Activated naive CD8-positive, alpha-beta T cell treated with anti-CD3 and anti-CD28 coated beads, Interleukin-2, amount 10 ng/mL, durations not matched to agents 7 days and 5 days (primary cell): ENCODE measurements at regions of chr19 and their contacts with region 1.

Region 1: GRCh38 chr19:12789904-12790619 is 1.2 kb upstream of the JUNB start:
- DNase-seq: peak; percentile 98
- ATAC-seq: peak; percentile 51
- H3K4me3 Mint-ChIP-seq: peak overlapping the region; percentile 94
- H3K27ac Mint-ChIP-seq: peak overlapping the region; percentile 95
- H3K4me1 Mint-ChIP-seq: peaks cover 28% of the 10 kb centered on the region
- H3K27me3 Mint-ChIP-seq: no peaks in the 10 kb centered on the region

Region 2: DNA sequence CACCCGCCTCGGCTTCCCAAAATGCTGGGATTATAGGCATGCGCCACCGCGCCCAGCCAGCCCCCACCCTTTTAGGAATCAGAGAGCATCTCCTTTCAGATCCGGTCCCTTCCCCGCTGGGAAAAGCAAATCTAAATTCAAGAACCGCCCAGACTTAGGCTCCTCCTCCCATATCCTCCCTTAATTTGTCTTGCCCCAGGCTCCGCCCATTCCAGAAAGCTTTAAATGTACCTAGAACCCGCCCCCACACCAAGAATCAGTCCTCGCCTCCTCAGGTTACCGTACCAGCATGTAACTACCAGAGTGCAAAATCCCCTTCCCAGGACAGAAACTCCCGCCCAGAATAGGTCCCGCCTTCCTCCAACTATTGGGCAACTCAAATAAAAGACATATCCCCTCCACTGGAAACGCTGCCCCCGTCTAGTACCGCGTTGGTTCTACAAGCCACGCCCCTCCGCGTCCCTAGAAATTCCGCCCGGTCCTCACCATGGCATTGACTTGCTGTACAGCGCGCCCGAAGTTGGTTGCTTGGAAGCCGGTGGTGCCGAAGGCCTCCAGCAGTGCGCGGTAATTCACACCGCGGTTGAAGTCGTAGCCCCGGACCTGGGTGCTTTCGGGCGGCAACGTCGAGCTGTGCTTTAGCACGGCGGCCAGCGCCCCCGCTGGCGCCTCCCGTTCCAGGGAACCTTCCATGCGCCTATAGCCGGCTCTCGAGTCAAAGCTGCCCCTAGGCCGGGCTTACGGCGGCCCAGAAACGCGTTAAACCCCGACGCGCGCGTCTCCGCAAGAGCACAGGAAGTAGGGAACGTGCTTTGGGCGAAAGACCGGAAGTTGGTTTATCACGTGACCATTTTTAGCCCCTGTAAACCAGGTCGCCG is 108.7 kb before region 1 on chr19 and contains the start of gene DHPS:
- POLR2A ChIA-PET with region 1: interaction called, 11 read pairs
- DNase-seq: peak; percentile 82
- ATAC-seq: peak; percentile 75
- H3K4me3 Mint-ChIP-seq: peak within 1 kb of the TSS; percentile 89
- H3K27ac Mint-ChIP-seq: peak within 1 kb of the TSS; percentile 89
- H3K4me1 Mint-ChIP-seq: peaks cover 18% of the 10 kb centered on the region
- H3K27me3 Mint-ChIP-seq: no peaks in the 10 kb centered on the region
- total RNA-seq, gene DHPS: 148 to 149 TPM

Region 3: GRCh38 chr19:12736995-12737834 is 52.8 kb before region 1 on chr19 and contains the start of gene GET3:
- POLR2A ChIA-PET with region 1: interaction called, 24 read pairs
- DNase-seq: peak; percentile 80
- ATAC-seq: peak; percentile 83
- H3K4me3 Mint-ChIP-seq: peak within 1 kb of the TSS; percentile 100
- H3K27ac Mint-ChIP-seq: peak within 1 kb of the TSS; percentile 98
- H3K4me1 Mint-ChIP-seq: peaks cover 24% of the 10 kb centered on the region
- H3K27me3 Mint-ChIP-seq: no peaks in the 10 kb centered on the region
- total RNA-seq, gene GET3: 46.4 to 47.2 TPM

Region 4: DNA sequence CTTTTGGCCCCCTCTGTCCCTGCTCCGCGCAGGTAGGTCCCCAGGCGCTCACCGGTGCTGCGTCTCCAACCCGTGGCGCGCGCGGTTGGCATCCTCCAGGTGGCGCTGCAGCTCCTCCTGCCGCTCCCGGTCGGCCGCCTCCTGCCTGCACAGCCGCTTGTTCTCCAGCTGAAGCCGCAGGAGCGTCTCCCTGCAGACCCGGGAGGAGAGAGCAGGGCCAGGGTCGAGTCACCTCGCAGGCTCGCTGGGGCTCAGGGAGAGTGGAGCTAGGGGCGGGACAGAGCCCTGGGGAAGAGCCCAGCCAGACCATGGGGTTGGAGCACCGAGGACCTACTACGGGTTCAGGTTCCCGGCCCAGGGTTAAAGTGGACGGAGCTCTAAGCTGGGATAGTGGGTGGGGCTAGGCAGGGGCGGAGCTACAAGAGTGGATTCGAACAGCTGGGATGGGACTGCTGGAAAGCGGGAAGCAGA is 24.0 kb before region 1 on chr19:
- POLR2A ChIA-PET with region 1: interaction called, 30 read pairs
- DNase-seq: peak; percentile 90
- ATAC-seq: peak; percentile 83
- H3K4me3 Mint-ChIP-seq: peak overlapping the region; percentile 43
- H3K27ac Mint-ChIP-seq: no peak overlapping the region
- H3K4me1 Mint-ChIP-seq: peaks cover 2% of the 10 kb centered on the region
- H3K27me3 Mint-ChIP-seq: no peaks in the 10 kb centered on the region

Region 5: GRCh38 chr19:12806239-12807081 is 16.4 kb after region 1 on chr19 and contains the start of gene RNASEH2A:
- POLR2A ChIA-PET with region 1: interaction called, 25 read pairs
- DNase-seq: peak; percentile 91
- ATAC-seq: peak; percentile 85
- H3K4me3 Mint-ChIP-seq: peak within 1 kb of the TSS; percentile 94
- H3K27ac Mint-ChIP-seq: peak within 1 kb of the TSS; percentile 89
- H3K4me1 Mint-ChIP-seq: peaks cover 19% of the 10 kb centered on the region
- H3K27me3 Mint-ChIP-seq: no peaks in the 10 kb centered on the region
- total RNA-seq, gene RNASEH2A: 46.2 to 47.8 TPM